ENCODE measurements at regions of chr1 and their contacts with region 1.

Region 1: GRCh38 chr1:213884942-213885341 is 102.8 kb upstream of the PROX1 start:
- DNase-seq: no peak
- ATAC-seq: no peak
- H3K4me3 ChIP-seq: no peak overlapping the region
- H3K27ac ChIP-seq: no peak overlapping the region
- H3K4me1 ChIP-seq: no peaks in the 10 kb centered on the region
- H3K27me3 ChIP-seq: no peaks in the 10 kb centered on the region
- CTCF ChIP-seq: no peak
- POLR2A ChIP-seq: no peak
- RAD21 ChIP-seq: no peak

Region 2: DNA sequence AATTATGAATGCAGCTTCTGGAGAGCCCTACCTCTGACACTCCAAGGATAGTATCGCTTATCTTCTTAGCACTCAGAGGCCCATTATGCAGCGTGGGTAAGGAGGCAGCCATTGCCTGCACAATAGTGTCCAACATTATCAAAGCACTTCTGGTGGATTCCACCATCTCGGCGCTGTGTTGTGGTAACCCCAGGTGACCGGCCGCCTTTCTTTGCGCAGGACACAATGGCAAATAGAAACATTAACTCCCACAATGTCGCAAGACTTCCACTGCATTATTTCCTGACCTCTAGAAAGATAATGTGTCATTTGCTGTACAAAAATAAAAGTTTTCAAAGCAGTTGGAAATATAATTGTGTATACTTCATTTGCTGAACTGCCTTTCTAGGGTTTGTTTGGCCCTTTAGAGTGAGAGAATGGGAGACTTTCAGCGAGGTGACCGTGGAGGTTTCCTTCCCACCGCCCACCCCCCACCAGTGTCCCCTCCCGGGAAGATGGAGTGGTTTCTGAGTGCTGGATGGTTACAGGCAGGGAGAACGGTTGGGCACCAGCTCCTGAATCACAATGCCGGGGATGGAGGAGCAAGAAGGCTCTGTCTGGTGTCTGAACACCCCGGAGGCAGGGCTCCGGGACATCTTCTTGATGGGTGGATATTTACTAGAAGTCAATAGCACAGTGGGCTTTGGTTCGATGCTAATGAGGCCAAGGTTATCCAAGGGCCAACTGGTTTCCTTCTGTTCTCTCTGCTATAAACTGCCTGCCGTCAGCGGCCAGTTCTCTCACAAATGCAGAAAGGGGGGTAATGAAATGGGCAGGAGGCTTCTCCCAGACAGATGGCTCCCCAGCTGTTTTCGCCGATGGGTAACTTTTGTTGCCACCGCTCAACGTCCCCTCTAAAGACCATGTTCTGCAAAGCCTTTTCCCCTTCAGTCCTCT is 112.5 kb before region 1 on chr1:
- CTCF ChIA-PET with region 1: no interaction called
- POLR2A ChIA-PET with region 1: no interaction called
- dilution Hi-C with region 1: no loop called
- in situ Hi-C with region 1: no loop called
- intact Hi-C with region 1: no loop called
- DNase-seq: no peak
- ATAC-seq: no peak
- H3K4me3 ChIP-seq: no peak overlapping the region
- H3K27ac ChIP-seq: no peak overlapping the region
- H3K4me1 ChIP-seq: no peaks in the 10 kb centered on the region
- H3K27me3 ChIP-seq: no peaks in the 10 kb centered on the region
- CTCF ChIP-seq: no peak
- POLR2A ChIP-seq: no peak
- RAD21 ChIP-seq: no peak

Region 3: GRCh38 chr1:214107322-214108096 is 222.6 kb after region 1 on chr1:
- CTCF ChIA-PET with region 1: no interaction called
- POLR2A ChIA-PET with region 1: no interaction called
- dilution Hi-C with region 1: no loop called
- in situ Hi-C with region 1: no loop called
- intact Hi-C with region 1: loop called (anchors 5 kb)
- DNase-seq: peak; percentile 0
- ATAC-seq: peak; percentile 68
- H3K4me3 ChIP-seq: peak overlapping the region; percentile 31
- H3K27ac ChIP-seq: no peak overlapping the region
- H3K4me1 ChIP-seq: peaks cover 2% of the 10 kb centered on the region
- H3K27me3 ChIP-seq: 0 out of 2 replicates have a peak, but pooled peaks cover 2% of the 10 kb centered on the region
- CTCF ChIP-seq: no peak
- POLR2A ChIP-seq: no peak
- RAD21 ChIP-seq: no peak

Measured in IMR-90 (cell line).